Heart left ventricle (tissue), 16 donors: ENCODE measurements at regions of chr16 and their contacts with region 1.

Region 1: DNA sequence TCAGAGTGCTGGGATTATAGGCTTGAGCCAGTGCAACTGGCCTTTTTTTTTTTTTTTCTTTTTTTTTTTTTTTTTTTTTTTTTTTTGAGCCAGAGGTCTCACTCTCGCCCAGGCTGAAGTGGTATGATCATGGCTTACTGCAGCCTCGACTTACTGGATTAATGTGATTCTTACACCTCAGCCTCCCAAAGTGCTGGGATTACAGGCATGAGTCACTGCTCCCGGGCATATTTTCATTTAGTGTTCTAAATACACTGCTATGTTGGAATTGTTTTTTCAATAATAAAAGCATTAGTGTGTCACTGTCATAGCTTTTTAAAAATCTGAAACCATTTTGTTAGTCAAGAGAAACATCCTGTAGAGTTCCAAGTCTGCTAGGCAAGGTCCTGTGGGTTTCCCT is 40.3 kb downstream of the NDE1 start:
- DNase-seq: no peak
- ATAC-seq: no peak
- H3K4me3 ChIP-seq: no peak overlapping the region
- H3K27ac ChIP-seq: no peak overlapping the region
- H3K4me1 ChIP-seq: no peaks in the 10 kb centered on the region
- H3K27me3 ChIP-seq: no peaks in the 10 kb centered on the region
- CTCF ChIP-seq: no peak
- POLR2A ChIP-seq: no peak

Region 2: DNA sequence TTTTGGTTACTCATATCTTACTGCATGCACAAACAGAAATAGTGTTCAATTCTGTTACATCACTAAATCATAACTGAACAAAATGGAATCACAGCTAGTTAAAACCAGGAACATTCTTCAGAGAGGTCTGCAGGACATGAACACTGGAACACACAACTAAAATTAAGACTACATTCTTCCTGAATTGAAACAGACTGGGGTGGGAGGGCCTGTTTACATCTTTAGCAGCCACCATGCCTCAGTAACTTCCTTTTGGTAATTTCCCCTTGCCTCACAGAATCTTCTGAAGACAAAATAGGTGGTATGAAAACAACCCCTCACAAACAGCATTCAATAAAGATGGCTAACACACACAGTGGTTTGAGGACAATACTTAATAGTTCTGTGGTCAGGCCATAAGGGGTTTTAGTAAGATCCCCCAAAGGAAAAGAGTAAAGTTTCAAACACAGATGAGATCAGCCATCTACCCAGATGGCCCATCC is 53.9 kb before region 1 on chr16:
- intact Hi-C with region 1: loop called in 1 of 10 experiments (anchors 5 kb)
- DNase-seq: no peak
- ATAC-seq: no peak
- H3K4me3 ChIP-seq: no peak overlapping the region
- H3K27ac ChIP-seq: peak overlapping the region in 1 of 12 donors; percentile 61
- H3K4me1 ChIP-seq: peaks cover 0 to 39% (median 9%) of the 10 kb centered on the region in 12 donors
- H3K27me3 ChIP-seq: no peaks in the 10 kb centered on the region
- CTCF ChIP-seq: no peak
- POLR2A ChIP-seq: no peak